ENCODE measurements at regions of chr14 and their contacts with region 1.

Region 1: GRCh38 chr14:57046175-57046574 is 222.5 kb downstream of the EXOC5 start:
- DNase-seq: no peak
- H3K4me3 ChIP-seq: no peak overlapping the region
- H3K27ac ChIP-seq: peak overlapping the region; percentile 95
- H3K4me1 ChIP-seq: peaks cover 49% of the 10 kb centered on the region
- H3K27me3 ChIP-seq: no peaks in the 10 kb centered on the region
- CTCF ChIP-seq: no peak

Region 2: GRCh38 chr14:56821807-56822615 is 224.2 kb before region 1 on chr14:
- CTCF ChIA-PET with region 1: no interaction called
- POLR2A ChIA-PET with region 1: no interaction called
- intact Hi-C with region 1: loop called (anchors 1 kb)
- DNase-seq: peak; percentile 76
- H3K4me3 ChIP-seq: peak overlapping the region; percentile 4
- H3K27ac ChIP-seq: peak overlapping the region; percentile 50
- H3K4me1 ChIP-seq: peaks cover 71% of the 10 kb centered on the region
- H3K27me3 ChIP-seq: no peaks in the 10 kb centered on the region
- CTCF ChIP-seq: no peak

Region 3: GRCh38 chr14:56858422-56858821 is 187.8 kb before region 1 on chr14:
- CTCF ChIA-PET with region 1: no interaction called
- POLR2A ChIA-PET with region 1: no interaction called
- intact Hi-C with region 1: no loop called
- DNase-seq: no peak
- H3K4me3 ChIP-seq: no peak overlapping the region
- H3K27ac ChIP-seq: no peak overlapping the region
- H3K4me1 ChIP-seq: no peaks in the 10 kb centered on the region
- H3K27me3 ChIP-seq: no peaks in the 10 kb centered on the region
- CTCF ChIP-seq: no peak